ENCODE measurements at regions of chr12 and their contacts with region 1.

Region 1: GRCh38 chr12:27969624-27970400 is 2.7 kb downstream of the PTHLH start:
- DNase-seq: peak; percentile 38
- ATAC-seq: peak; percentile 91
- H3K4me3 ChIP-seq: peak overlapping the region; percentile 46 to 65 (median 62)
- H3K27ac ChIP-seq: no peak overlapping the region
- H3K4me1 ChIP-seq: peaks cover 28% of the 10 kb centered on the region
- H3K27me3 ChIP-seq: peaks cover 0 to 50% of the 10 kb centered on the region in 2 experiments; a peak in 4 of 5 replicates
- CTCF ChIP-seq: peak; percentile 65
- EP300 ChIP-seq: no peak
- POLR2A ChIP-seq: no peak
- RAD21 ChIP-seq: no peak

Region 2: GRCh38 chr12:27743601-27744000 is 226.2 kb before region 1 on chr12:
- CTCF ChIA-PET with region 1: no interaction called
- POLR2A ChIA-PET with region 1: no interaction called
- in situ Hi-C with region 1: no loop called
- intact Hi-C with region 1: no loop called
- DNase-seq: no peak
- ATAC-seq: no peak
- H3K4me3 ChIP-seq: no peak overlapping the region
- H3K27ac ChIP-seq: no peak overlapping the region
- H3K4me1 ChIP-seq: peaks cover 16% of the 10 kb centered on the region; the same call in 1 of the 2 replicates
- H3K27me3 ChIP-seq: no peaks in the 10 kb centered on the region
- CTCF ChIP-seq: no peak
- EP300 ChIP-seq: no peak
- POLR2A ChIP-seq: no peak
- RAD21 ChIP-seq: no peak

Region 3: GRCh38 chr12:28172434-28173030 is 202.7 kb after region 1 on chr12:
- CTCF ChIA-PET with region 1: no interaction called
- POLR2A ChIA-PET with region 1: no interaction called
- in situ Hi-C with region 1: no loop called
- intact Hi-C with region 1: loop called (anchors 1 kb)
- DNase-seq: peak; percentile 39
- ATAC-seq: peak; percentile 85
- H3K4me3 ChIP-seq: no peak overlapping the region
- H3K27ac ChIP-seq: no peak overlapping the region
- H3K4me1 ChIP-seq: no peaks in the 10 kb centered on the region
- H3K27me3 ChIP-seq: no peaks in the 10 kb centered on the region
- CTCF ChIP-seq: peak; percentile 68
- EP300 ChIP-seq: no peak
- POLR2A ChIP-seq: no peak
- RAD21 ChIP-seq: peak; percentile 33; the same call in 1 of the 2 replicates

Region 4: GRCh38 chr12:28872654-28873268 is 902.9 kb after region 1 on chr12:
- CTCF ChIA-PET with region 1: no interaction called
- POLR2A ChIA-PET with region 1: no interaction called
- in situ Hi-C with region 1: no loop called
- intact Hi-C with region 1: loop called (anchors 10 kb)
- DNase-seq: peak; percentile 21
- ATAC-seq: peak; percentile 83
- H3K4me3 ChIP-seq: no peak overlapping the region
- H3K27ac ChIP-seq: no peak overlapping the region
- H3K4me1 ChIP-seq: no peaks in the 10 kb centered on the region
- H3K27me3 ChIP-seq: no peaks in the 10 kb centered on the region
- CTCF ChIP-seq: peak; percentile 69
- EP300 ChIP-seq: no peak
- POLR2A ChIP-seq: no peak
- RAD21 ChIP-seq: no peak